GM10248 (cell line): ENCODE measurements at regions of chr1 and their contacts with region 1.

Region 1: DNA sequence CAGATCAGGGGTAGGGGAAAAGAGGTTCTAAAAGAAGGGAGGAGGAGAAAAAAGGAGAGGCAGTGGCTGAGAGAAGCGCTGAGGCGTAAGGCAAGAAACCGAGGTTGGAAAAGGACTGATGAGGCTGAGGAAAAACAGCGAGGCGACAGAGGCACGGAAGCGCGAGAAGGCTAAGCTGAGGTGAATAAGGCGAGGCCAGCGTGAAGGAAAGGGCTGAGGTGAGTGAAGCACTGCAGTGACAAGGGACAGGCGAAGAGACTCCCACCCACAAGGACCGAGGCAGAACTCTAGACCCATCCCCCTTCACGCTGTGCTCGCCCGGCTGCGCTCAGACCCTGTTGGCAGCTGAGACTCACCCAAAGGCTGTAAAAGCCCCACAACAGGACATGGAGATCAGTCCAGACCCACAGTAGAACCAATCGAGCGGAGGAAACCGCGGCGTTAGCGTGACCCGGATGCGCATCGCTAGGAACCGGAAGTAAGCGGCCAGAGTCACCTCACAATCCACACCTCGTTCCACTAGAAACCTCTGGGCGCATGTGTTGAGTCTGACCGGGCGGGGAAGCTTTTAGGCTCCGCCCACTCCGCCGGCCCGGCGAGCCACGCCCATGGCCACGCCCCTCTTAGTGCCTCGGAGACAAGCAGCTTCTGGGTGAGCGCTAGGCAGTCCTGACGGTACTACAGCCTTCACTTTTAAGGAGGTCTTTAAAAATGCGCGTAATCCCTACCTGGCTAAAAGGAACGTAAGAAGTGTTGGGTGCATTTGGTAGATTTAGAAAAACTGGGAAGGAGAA is at the start of gene EYA3:
- DNase-seq: peak; percentile 99
- CTCF ChIP-seq: no peak

Region 2: DNA sequence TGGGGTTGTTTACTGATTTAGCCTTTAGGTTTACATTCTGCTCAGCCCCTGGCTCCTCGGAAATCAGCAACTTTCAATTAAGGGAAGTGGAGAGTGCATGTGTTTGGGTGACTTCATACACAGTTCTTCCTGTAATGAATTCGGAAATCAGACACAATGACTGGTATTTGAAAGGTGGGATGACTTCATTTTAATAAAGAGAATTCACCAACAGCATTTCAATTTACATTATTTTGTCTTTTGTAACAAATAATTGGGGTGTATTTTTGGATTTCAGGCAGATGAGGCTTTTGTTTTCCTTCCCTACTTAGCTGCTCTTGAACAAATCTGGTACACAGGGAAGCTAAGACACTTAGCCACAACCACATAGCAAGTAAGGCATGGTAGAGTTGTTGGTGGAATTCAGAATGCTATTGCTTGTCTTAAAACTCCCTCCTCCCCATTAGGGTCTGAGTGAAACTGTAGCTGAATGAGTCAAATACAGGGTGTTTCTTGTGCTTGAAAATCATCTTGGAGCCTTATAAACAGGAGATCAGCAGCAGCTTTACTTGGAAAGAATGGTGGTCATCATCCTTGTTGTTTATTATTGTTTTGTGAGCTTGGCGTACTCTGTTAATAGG is 314.4 kb before region 1 on chr1:
- CTCF ChIA-PET with region 1: no interaction called
- POLR2A ChIA-PET with region 1: no interaction called
- DNase-seq: no peak
- CTCF ChIP-seq: no peak

Region 3: GRCh38 chr1:27992276-27992675 is 96.1 kb before region 1 on chr1:
- CTCF ChIA-PET with region 1: no interaction called
- POLR2A ChIA-PET with region 1: no interaction called
- DNase-seq: no peak
- CTCF ChIP-seq: no peak

Region 4: DNA sequence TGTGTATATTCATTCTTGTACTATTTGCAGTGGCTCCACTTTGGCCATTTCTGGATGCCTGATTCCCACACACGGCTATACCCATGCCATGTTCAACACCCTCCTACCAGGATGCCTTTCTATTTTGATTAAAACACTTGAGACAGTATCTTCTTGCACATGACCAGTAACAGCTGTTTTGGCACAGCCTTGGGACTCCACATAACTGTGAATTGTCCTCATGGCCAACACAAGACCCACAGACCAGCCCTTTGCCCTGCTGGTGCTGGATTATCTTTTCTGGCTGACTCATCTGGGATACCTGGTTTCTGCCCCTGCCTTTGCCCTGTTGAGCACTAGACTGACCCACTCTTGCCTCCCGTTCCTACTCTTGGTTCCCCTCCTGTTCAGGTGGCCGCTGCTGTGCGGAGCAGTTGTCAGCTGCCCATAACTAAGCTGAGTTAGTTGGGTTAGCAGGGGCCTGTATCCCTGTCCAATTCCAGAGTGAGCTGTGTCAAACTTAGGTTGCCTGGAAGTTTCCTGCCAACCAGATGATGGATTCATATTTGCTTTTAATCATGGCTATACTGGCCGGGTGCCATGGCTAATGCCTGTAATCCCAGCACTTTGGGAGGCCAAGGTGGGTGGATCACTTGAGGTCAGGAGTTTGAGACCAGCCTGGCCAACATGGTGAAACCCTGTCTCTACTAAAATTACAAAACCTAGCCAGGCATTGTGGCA is 10.8 kb after region 1 on chr1:
- CTCF ChIA-PET with region 1: interaction called, 34 read pairs
- POLR2A ChIA-PET with region 1: no interaction called
- DNase-seq: no peak
- CTCF ChIP-seq: no peak

Region 5: GRCh38 chr1:28112388-28113241 is 24.2 kb after region 1 on chr1:
- CTCF ChIA-PET with region 1: interaction called, 32 read pairs
- POLR2A ChIA-PET with region 1: no interaction called
- DNase-seq: no peak
- CTCF ChIP-seq: no peak

Region 6: GRCh38 chr1:28135371-28136168 is 47.2 kb after region 1 on chr1:
- CTCF ChIA-PET with region 1: interaction called, 11 read pairs
- POLR2A ChIA-PET with region 1: no interaction called
- DNase-seq: no peak
- CTCF ChIP-seq: no peak

Region 7: DNA sequence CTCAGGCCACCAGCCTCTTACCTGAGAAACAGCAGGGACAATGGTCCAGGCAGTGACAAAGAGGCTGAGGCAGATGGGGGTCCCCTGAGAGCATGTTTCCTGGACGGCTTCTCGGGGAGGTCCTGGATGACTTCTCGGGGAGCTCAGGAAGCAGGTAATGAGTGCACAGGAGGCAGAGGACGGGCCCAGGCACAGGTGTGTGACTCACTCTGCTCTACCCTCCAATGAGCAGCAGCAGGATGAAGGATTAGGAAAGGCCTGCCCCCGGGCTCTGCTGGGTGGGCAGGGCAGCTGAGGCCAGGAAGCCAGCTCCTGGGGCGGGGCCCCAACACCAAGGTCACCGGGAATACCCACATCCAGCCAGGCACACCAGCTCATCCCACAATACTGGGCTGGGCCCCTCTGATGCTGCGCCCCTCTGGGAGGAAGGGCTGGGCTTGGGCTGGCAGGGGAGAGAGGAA is 105.4 kb after region 1 on chr1:
- CTCF ChIA-PET with region 1: interaction called, 28 read pairs
- POLR2A ChIA-PET with region 1: no interaction called
- DNase-seq: no peak
- CTCF ChIP-seq: no peak

Region 8: DNA sequence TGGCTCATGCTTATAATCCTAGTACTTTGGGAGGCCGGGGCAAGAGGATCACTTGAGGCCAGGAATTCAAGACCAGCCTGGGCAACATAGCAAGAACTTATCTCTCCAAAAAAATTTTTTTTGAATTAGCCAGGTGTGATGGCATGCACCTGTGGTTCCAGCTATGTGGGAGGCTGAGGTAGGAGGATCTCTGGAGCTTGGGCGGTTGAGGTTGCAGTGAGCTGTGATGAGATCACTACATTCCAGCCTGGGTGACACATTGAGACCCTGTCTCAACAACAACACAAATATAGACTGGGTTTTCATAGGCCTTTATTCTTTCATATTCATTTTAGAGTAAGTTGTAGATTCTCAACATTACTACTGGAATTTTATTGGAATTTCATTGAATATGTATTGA is 253.2 kb after region 1 on chr1:
- CTCF ChIA-PET with region 1: no interaction called
- POLR2A ChIA-PET with region 1: no interaction called
- DNase-seq: no peak
- CTCF ChIP-seq: no peak

Region 9: GRCh38 chr1:29282924-29283811 is 1194.8 kb after region 1 on chr1:
- CTCF ChIA-PET with region 1: no interaction called
- POLR2A ChIA-PET with region 1: no interaction called
- DNase-seq: peak; percentile 67
- CTCF ChIP-seq: no peak